Sciatic nerve (tissue), 2 donors: ENCODE measurements at regions of chr4 and their contacts with region 1.

Region 1: GRCh38 chr4:61251129-61251528 is 51.0 kb downstream of the ADGRL3 start:
- DNase-seq: no peak
- ATAC-seq: no peak

Region 2: GRCh38 chr4:61200187-61200915 is 50.8 kb before region 1 on chr4 and contains the start of gene ADGRL3:
- intact Hi-C with region 1: loop called (anchors 2 kb)
- DNase-seq: peak; percentile 71
- ATAC-seq: peak; percentile 74
- total RNA-seq, gene ADGRL3: 45.9 TPM

Region 3: GRCh38 chr4:61210186-61210939 is 40.8 kb before region 1 on chr4:
- intact Hi-C with region 1: no loop called
- DNase-seq: no peak
- ATAC-seq: no peak

Region 4: GRCh38 chr4:61493470-61493869 is 242.3 kb after region 1 on chr4:
- intact Hi-C with region 1: no loop called
- DNase-seq: no peak
- ATAC-seq: no peak